HEK293 (cell line): ENCODE measurements at regions of chr19 and their contacts with region 1.

Region 1: DNA sequence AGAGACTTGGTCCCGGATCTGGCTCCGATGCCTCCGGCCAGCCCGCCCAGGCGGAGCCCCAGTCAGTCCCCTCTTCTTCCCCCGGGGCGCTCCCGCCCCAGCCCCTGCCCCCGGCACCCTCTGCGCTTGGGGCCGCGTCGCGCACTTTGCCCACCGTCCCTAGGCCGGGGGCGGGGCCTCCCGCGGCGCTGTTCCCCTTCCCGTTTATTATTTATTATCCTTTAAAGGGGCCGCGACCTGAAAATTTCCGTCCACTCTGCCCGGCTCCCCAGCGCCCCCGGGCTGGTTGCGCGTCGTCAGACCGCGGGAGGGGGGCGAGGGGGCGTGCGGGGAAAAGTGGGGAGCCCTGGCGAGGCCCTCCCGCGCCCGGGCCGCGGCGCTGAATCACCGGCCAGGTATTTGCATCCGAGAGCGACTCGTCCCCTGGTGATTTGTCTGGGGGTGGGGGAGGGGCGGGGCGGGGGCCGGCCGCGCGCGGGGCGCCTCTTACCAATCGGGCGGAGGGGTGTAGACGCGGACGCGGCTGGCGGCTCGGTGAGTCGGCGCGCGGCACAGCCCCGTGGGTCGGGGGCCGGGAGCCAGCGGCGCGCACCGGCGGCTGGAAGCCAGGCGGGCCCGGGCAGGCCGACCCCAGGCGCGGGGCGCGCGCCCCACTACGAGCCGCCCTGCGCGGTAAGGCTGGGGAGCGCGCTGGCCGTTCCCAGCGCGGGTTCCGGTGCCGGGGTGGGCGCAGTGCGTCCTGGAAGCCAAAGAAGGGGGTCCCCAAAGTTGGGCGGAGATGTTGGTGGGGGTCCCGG is at the start of gene ARID3A:
- H3K4me3 ChIP-seq: peak within 1 kb of the TSS; percentile 83
- H3K27ac ChIP-seq: peak within 1 kb of the TSS; percentile 82
- H3K4me1 ChIP-seq: no peaks in the 10 kb centered on the region; the same call in 1 of the 2 replicates
- CTCF ChIP-seq: no peak

Region 2: DNA sequence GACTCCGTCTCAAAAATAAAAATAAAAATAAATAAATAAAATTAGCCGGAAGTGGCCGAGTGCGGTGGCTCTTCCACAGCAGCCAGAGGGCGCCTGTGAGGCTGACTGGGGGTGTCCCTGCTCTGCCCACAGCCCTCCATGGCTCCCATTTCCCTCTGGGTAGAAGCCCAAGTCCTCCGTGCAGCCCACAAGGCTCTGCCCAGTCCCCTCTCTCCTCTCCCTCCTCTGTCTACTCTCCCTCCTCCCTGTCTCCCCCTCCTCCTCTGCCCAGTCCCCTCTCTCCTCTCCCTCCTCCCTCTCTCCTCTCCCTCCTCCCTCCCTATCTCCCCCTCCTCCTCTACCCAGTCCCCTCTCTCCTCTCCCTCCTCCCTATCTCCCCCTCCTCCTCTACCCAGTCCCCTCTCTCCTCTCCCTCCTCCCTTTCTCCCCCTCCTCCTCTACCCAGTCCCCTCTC is 154.4 kb before region 1 on chr19:
- CTCF ChIA-PET with region 1: interaction called, 15 read pairs
- POLR2A ChIA-PET with region 1: interaction called, 5 read pairs
- H3K4me3 ChIP-seq: no peak overlapping the region
- H3K27ac ChIP-seq: no peak overlapping the region
- H3K4me1 ChIP-seq: no peaks in the 10 kb centered on the region
- CTCF ChIP-seq: no peak

Region 3: DNA sequence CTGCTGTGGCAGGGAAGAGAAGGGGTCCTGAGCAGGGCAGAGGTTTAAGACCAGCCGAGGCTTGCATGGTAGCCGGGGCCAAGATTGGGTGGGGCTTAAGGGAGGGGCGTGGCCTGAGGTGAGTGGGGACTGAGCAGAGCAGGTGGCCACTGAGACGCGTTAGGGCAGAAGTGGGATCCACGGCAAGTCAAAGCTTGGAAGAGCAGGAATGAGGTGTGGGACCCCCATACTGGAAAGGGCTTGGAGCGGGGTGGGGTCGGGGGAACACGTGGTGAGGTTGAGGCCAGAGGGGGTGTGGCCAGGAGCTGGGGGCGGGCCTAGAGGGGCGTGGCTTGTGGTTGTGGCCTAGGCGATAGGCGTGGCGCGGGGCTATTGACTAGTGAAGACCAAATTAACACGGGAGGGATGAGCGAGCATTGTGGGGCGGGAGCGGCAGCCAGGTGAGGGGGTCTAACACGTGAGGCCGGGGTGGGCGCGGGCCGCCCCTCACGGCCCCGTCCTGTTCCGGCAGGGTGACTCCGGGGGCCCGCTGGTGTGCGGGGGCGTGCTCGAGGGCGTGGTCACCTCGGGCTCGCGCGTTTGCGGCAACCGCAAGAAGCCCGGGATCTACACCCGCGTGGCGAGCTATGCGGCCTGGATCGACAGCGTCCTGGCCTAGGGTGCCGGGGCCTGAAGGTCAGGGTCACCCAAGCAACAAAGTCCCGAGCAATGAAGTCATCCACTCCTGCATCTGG is 63.0 kb before region 1 on chr19:
- CTCF ChIA-PET with region 1: interaction called, 10 read pairs
- POLR2A ChIA-PET with region 1: interaction called, 3 read pairs
- H3K4me3 ChIP-seq: no peak overlapping the region
- H3K27ac ChIP-seq: no peak overlapping the region
- H3K4me1 ChIP-seq: no peaks in the 10 kb centered on the region
- CTCF ChIP-seq: no peak

Region 4: GRCh38 chr19:984165-984967 is 58.6 kb after region 1 on chr19 and contains the start of gene WDR18:
- CTCF ChIA-PET with region 1: interaction called, 116 read pairs
- POLR2A ChIA-PET with region 1: interaction called, 3 read pairs
- H3K4me3 ChIP-seq: peak within 1 kb of the TSS; percentile 99
- H3K27ac ChIP-seq: peak within 1 kb of the TSS; percentile 90
- H3K4me1 ChIP-seq: peaks cover 2% of the 10 kb centered on the region; the same call in 1 of the 2 replicates
- CTCF ChIP-seq: peak; percentile 90

Region 5: GRCh38 chr19:996051-996838 is 70.5 kb after region 1 on chr19:
- CTCF ChIA-PET with region 1: interaction called, 13 read pairs
- POLR2A ChIA-PET with region 1: interaction called, 3 read pairs
- H3K4me3 ChIP-seq: peak overlapping the region; percentile 14
- H3K27ac ChIP-seq: no peak overlapping the region
- H3K4me1 ChIP-seq: peaks cover 7% of the 10 kb centered on the region
- CTCF ChIP-seq: no peak

Region 6: GRCh38 chr19:1213391-1214286 is 287.9 kb after region 1 on chr19:
- CTCF ChIA-PET with region 1: no interaction called
- POLR2A ChIA-PET with region 1: interaction called, 11 read pairs
- H3K4me3 ChIP-seq: no peak overlapping the region
- H3K27ac ChIP-seq: peak overlapping the region; percentile 51
- H3K4me1 ChIP-seq: peaks cover 12% of the 10 kb centered on the region; the same call in 1 of the 2 replicates
- CTCF ChIP-seq: no peak

Region 7: GRCh38 chr19:1241417-1242095 is 315.8 kb after region 1 on chr19 and contains the start of gene ATP5F1D:
- CTCF ChIA-PET with region 1: interaction called, 19 read pairs
- POLR2A ChIA-PET with region 1: no interaction called
- H3K4me3 ChIP-seq: peak within 1 kb of the TSS; percentile 75
- H3K27ac ChIP-seq: peak within 1 kb of the TSS; percentile 63
- H3K4me1 ChIP-seq: peaks cover 8% of the 10 kb centered on the region
- CTCF ChIP-seq: 0 out of 2 replicates have a peak, but pooled peaks have one; percentile 16